ENCODE measurements at regions of chr12 and their contacts with region 1.

Region 1: DNA sequence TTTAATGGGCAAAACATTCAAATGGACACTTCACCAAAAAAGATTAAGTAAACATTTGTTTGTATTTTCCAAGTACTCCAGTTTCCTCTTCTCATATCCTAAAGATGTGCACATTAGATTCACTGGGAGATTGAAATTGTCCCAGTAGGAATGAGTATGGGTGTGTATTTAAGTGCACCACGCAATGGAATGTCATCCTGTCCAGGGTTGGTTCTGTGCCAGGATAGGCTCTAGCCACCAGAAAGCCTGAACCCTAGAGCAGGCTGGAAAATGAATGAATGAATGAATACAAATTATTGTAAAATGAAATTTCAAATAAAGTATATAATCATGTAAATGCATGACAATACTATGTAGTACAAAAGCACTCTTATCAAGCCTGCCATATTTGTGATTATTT is 14.0 kb downstream of the CEP83 start:
- DNase-seq: no peak
- H3K4me3 ChIP-seq: no peak overlapping the region
- H3K27ac ChIP-seq: no peak overlapping the region
- H3K4me1 ChIP-seq: no peaks in the 10 kb centered on the region
- H3K27me3 ChIP-seq: no peaks in the 10 kb centered on the region
- CTCF ChIP-seq: no peak

Region 2: DNA sequence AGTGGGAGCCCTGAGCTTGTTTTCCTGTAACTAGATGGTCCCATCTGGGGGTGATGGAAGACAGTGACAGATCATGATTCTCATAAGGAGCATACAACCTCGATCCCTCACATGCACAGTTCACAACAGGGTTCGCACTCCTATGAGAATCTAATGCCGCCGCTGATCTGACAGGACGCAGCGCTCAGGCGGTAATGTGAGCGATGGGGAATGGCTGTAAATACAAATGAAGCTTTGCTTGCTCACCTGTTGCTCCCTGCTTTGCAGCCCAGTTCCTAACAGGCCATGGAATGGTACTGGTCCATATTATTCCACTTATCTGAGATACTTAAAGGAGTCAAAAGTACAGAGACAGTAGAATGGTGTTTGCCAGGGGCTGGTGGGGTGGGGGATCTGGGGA is 23.9 kb after region 1 on chr12:
- intact Hi-C with region 1: loop called (anchors 1 kb)
- DNase-seq: no peak
- H3K4me3 ChIP-seq: no peak overlapping the region
- H3K27ac ChIP-seq: no peak overlapping the region
- H3K4me1 ChIP-seq: no peaks in the 10 kb centered on the region
- H3K27me3 ChIP-seq: no peaks in the 10 kb centered on the region
- CTCF ChIP-seq: no peak

Measured in ascending aorta (tissue), 2 donors.